ENCODE measurements at regions of chr12 and their contacts with region 1.

Region 1: GRCh38 chr12:56078990-56079664 is 838 bp upstream of the ERBB3 start:
- DNase-seq: peak in 13 of 14 experiments; percentile 23 to 69 (median 44)
- ATAC-seq: peak; percentile 67
- H3K4me3 ChIP-seq: peak overlapping the region; percentile 76
- H3K4me3 Mint-ChIP-seq: peak overlapping the region; percentile 87
- H3K27ac ChIP-seq: no peak overlapping the region
- H3K27ac Mint-ChIP-seq: no peak overlapping the region
- H3K4me1 ChIP-seq: peaks cover 21% of the 10 kb centered on the region
- H3K4me1 Mint-ChIP-seq: peaks cover 14% of the 10 kb centered on the region
- H3K27me3 ChIP-seq: peaks cover 14 to 23% of the 10 kb centered on the region in 2 experiments
- H3K27me3 Mint-ChIP-seq: peaks cover 17% of the 10 kb centered on the region
- CTCF ChIP-seq: peak; percentile 66

Region 2: DNA sequence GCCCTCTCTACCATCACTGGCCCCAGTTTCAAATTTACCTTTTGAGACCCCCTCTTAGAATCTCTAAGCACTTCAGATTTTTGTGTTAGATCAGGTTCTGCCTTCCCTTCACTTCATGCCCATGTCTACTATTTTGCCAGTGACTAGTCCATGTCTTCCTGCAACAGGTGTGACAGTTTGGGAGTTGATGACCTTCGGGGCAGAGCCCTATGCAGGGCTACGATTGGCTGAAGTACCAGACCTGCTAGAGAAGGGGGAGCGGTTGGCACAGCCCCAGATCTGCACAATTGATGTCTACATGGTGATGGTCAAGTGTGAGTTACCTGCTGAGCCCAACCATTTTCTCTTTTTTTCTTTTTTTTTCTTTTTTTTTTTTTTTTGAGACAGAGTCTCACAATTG is 19.5 kb after region 1 on chr12:
- CTCF ChIA-PET with region 1: interaction called, 32 read pairs
- POLR2A ChIA-PET with region 1: interaction called, 35 read pairs
- intact Hi-C with region 1: loop called (anchors 1 to 2 kb)
- DNase-seq: no peak
- ATAC-seq: no peak
- H3K4me3 ChIP-seq: no peak overlapping the region
- H3K4me3 Mint-ChIP-seq: no peak overlapping the region
- H3K27ac ChIP-seq: no peak overlapping the region
- H3K27ac Mint-ChIP-seq: no peak overlapping the region
- H3K4me1 ChIP-seq: peaks cover 25% of the 10 kb centered on the region
- H3K4me1 Mint-ChIP-seq: peaks cover 34% of the 10 kb centered on the region
- H3K27me3 ChIP-seq: no peaks in the 10 kb centered on the region
- H3K27me3 Mint-ChIP-seq: no peaks in the 10 kb centered on the region
- CTCF ChIP-seq: no peak

Region 3: DNA sequence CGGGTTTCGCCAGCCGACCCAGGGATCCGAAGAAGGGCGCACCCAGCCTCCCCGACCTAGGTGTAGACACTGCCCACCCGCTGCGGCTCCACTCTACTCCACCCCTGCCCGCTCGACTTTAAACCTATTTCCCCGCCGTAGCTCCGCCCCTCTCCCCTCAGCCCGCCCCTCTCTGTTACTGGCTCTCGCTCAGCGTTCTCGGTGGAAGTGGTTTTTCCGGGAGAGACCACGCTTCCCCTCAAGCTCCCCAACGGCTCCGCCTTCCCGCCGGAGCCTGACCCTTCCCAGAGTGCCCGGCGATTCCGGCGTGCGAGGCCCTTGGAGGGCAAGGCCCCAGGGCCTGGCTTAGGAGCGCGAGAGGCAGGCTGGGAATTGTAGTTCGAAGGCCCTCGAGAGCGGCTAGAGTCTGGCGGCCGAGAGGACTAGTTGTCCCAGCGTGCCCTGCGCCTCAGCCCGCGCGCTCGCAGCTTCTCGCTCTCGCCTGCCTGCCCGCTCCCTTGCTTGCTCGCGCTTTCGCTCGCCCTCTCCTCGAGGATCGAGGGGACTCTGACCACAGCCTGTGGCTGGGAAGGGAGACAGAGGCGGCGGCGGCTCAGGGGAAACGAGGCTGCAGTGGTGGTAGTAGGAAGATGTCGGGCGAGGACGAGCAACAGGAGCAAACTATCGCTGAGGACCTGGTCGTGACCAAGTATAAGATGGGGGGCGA is 25.1 kb after region 1 on chr12 and contains the start of gene PA2G4:
- CTCF ChIA-PET with region 1: interaction called, 32 read pairs
- POLR2A ChIA-PET with region 1: interaction called, 35 read pairs
- intact Hi-C with region 1: loop called (anchors 1 to 2 kb)
- DNase-seq: peak; percentile 89 to 99 (median 96)
- ATAC-seq: peak; percentile 88
- H3K4me3 ChIP-seq: peak within 1 kb of the TSS; percentile 90
- H3K4me3 Mint-ChIP-seq: peak within 1 kb of the TSS; percentile 93
- H3K27ac ChIP-seq: peak within 1 kb of the TSS; percentile 63 to 95
- H3K27ac Mint-ChIP-seq: peak within 1 kb of the TSS; percentile 100
- H3K4me1 ChIP-seq: peaks cover 48% of the 10 kb centered on the region
- H3K4me1 Mint-ChIP-seq: peaks cover 67% of the 10 kb centered on the region
- H3K27me3 ChIP-seq: no peaks in the 10 kb centered on the region
- H3K27me3 Mint-ChIP-seq: no peaks in the 10 kb centered on the region
- CTCF ChIP-seq: no peak
- total RNA-seq, gene PA2G4: 51.0 to 61.0 TPM

Region 4: GRCh38 chr12:56165369-56165768 is 86.2 kb after region 1 on chr12:
- CTCF ChIA-PET with region 1: no interaction called
- POLR2A ChIA-PET with region 1: no interaction called
- intact Hi-C with region 1: no loop called
- DNase-seq: no peak
- ATAC-seq: no peak
- H3K4me3 ChIP-seq: no peak overlapping the region
- H3K4me3 Mint-ChIP-seq: no peak overlapping the region
- H3K27ac ChIP-seq: no peak overlapping the region
- H3K27ac Mint-ChIP-seq: peak overlapping the region; percentile 24
- H3K4me1 ChIP-seq: peaks cover 21% of the 10 kb centered on the region
- H3K4me1 Mint-ChIP-seq: peaks cover 11% of the 10 kb centered on the region
- H3K27me3 ChIP-seq: no peaks in the 10 kb centered on the region
- H3K27me3 Mint-ChIP-seq: no peaks in the 10 kb centered on the region
- CTCF ChIP-seq: no peak

Region 5: DNA sequence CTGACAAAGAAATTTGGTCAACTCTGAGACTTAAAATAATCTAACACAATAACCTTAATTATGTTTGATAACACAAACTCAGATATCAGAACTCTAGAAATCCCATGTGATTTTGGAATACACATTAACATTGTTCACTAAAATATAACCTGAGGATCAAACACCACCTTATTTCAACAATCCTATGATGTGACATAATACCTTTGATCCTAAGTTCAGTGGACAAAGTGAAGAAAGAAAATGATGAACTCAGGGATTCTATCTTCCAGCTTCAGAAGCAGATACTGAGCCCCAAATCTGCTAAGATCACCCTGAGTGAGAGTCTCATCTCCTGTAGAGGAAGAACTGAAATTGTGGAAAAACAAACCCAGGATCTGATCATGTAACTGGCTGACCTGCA is 319.2 kb after region 1 on chr12:
- CTCF ChIA-PET with region 1: no interaction called
- POLR2A ChIA-PET with region 1: no interaction called
- intact Hi-C with region 1: no loop called
- DNase-seq: no peak
- ATAC-seq: no peak
- H3K4me3 ChIP-seq: no peak overlapping the region
- H3K4me3 Mint-ChIP-seq: no peak overlapping the region
- H3K27ac ChIP-seq: no peak overlapping the region
- H3K27ac Mint-ChIP-seq: no peak overlapping the region
- H3K4me1 ChIP-seq: no peaks in the 10 kb centered on the region
- H3K4me1 Mint-ChIP-seq: no peaks in the 10 kb centered on the region
- H3K27me3 ChIP-seq: no peaks in the 10 kb centered on the region
- H3K27me3 Mint-ChIP-seq: no peaks in the 10 kb centered on the region
- CTCF ChIP-seq: no peak

Measured in CD4-positive, alpha-beta T cell (primary cell).